ENCODE measurements at regions of chr2 and their contacts with region 1.

Region 1: DNA sequence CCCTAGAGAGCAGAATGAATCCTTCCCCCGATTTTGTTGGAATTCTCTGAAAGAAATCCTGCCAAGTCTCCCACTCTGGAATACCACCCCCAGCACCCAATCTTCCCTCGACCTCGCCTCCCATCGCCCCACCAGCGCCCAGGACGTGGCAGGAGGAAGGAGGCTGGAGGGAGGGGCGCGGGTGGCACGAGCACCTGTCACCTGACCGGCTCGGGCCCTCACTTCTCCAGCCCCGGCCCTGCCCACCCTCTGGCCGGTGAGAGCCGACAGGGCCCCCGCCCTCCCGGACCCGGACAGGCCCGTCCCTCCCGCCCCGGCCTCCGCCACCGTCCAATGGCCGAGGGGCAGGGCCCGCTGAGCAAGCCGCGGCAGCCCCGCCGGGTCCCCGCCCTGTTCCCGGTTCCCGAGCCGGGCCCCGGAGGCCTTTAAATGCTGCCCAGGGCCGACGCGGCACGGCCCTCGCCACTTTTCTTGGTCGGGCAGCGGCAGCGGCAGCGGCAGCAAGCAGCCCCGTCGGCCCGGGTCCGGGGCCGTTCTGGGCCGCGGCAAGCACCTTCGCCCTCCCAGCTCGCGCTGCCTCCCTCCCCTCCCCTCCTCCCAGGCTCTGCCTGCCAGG is at the start of gene LGALSL:
- DNase-seq: peak; percentile 89
- H3K4me3 Mint-ChIP-seq: peak within 1 kb of the TSS; percentile 78
- H3K27ac Mint-ChIP-seq: peak within 1 kb of the TSS; percentile 81
- H3K4me1 Mint-ChIP-seq: peaks cover 8% of the 10 kb centered on the region
- H3K27me3 Mint-ChIP-seq: no peaks in the 10 kb centered on the region
- CTCF ChIP-seq: no peak
- total RNA-seq, gene LGALSL: 9.3 and 12.1 TPM in 2 replicates

Region 2: GRCh38 chr2:64362562-64363026 is 91.3 kb before region 1 on chr2:
- CTCF ChIA-PET with region 1: no interaction called
- intact Hi-C with region 1: loop called (anchors 2 kb)
- DNase-seq: peak; percentile 78
- H3K4me3 Mint-ChIP-seq: peak overlapping the region; percentile 27
- H3K27ac Mint-ChIP-seq: peak overlapping the region; percentile 52
- H3K4me1 Mint-ChIP-seq: peaks cover 45% of the 10 kb centered on the region
- H3K27me3 Mint-ChIP-seq: peaks cover 2% of the 10 kb centered on the region
- CTCF ChIP-seq: no peak

Measured in Calu3 (cell line).